Activated CD4-positive, alpha-beta T cell treated with anti-CD3 and anti-CD28 coated beads, Interleukin-2, amount 10 ng/mL, durations not matched to agents 24 days and 14 days (primary cell): ENCODE measurements at regions of chr1 and their contacts with region 1.

Region 1: GRCh38 chr1:38873027-38873969 is at the start of gene MYCBP:
- DNase-seq: peak; percentile 99
- H3K4me3 Mint-ChIP-seq: peak within 1 kb of the TSS; percentile 91
- H3K27ac Mint-ChIP-seq: peak within 1 kb of the TSS; percentile 81
- H3K4me1 Mint-ChIP-seq: peaks cover 26% of the 10 kb centered on the region
- H3K27me3 Mint-ChIP-seq: no peaks in the 10 kb centered on the region
- total RNA-seq, gene MYCBP: 35.1 and 40.7 TPM in 2 replicates

Region 2: DNA sequence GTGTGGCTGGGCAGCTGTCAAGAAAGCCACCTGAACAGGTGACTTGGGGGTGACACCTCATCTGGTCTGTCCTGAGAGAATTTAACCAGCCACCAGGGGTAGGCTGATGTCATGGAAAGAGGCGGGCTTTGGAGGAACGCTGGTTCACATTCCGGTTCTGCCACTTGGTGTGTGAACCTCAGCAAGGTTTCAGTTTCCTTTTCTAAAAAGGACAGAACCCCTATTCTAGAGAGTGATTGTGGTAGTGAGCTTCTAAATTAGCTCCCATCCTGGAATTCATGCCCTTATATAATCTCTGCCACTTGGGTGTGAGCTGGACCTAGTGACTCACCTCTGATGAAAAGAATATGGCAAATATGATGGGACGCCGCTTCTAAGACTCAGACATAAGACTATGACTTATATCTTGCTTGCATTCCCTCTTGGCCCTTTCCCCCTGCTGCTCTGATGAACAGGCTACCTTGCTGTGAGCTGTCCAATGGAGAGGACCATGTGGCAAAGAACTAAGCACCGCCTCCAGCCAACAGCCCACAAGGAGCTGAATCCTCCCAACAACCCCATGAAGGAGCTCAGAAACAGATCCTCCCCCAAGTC is 345.8 kb before region 1 on chr1:
- intact Hi-C with region 1: no loop called
- DNase-seq: peak; percentile 94
- H3K4me3 Mint-ChIP-seq: peak overlapping the region; percentile 63
- H3K27ac Mint-ChIP-seq: peak overlapping the region; percentile 86
- H3K4me1 Mint-ChIP-seq: peaks cover 21% of the 10 kb centered on the region
- H3K27me3 Mint-ChIP-seq: peaks cover 9% of the 10 kb centered on the region

Region 3: DNA sequence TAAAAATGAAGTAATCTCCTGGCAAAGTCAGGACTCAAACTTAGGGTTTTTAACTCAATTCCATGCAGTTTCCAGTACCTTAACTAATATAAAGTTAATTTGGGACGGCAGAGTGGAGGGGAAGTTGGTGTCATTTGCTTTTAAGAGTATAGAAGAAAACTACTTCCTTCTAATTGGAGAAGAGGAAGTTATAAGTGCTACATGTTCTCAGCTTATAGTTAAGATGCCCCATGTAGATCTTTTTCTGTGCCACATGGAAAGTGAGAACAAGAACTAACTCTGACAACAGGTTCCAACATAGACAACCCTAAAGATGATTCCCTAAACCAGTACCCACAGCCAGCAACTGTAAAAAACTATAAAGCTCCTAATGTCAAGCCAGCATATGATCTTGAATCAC is 25.2 kb before region 1 on chr1:
- intact Hi-C with region 1: no loop called
- DNase-seq: no peak
- H3K4me3 Mint-ChIP-seq: no peak overlapping the region
- H3K27ac Mint-ChIP-seq: no peak overlapping the region
- H3K4me1 Mint-ChIP-seq: peaks cover 5% of the 10 kb centered on the region
- H3K27me3 Mint-ChIP-seq: no peaks in the 10 kb centered on the region

Region 4: DNA sequence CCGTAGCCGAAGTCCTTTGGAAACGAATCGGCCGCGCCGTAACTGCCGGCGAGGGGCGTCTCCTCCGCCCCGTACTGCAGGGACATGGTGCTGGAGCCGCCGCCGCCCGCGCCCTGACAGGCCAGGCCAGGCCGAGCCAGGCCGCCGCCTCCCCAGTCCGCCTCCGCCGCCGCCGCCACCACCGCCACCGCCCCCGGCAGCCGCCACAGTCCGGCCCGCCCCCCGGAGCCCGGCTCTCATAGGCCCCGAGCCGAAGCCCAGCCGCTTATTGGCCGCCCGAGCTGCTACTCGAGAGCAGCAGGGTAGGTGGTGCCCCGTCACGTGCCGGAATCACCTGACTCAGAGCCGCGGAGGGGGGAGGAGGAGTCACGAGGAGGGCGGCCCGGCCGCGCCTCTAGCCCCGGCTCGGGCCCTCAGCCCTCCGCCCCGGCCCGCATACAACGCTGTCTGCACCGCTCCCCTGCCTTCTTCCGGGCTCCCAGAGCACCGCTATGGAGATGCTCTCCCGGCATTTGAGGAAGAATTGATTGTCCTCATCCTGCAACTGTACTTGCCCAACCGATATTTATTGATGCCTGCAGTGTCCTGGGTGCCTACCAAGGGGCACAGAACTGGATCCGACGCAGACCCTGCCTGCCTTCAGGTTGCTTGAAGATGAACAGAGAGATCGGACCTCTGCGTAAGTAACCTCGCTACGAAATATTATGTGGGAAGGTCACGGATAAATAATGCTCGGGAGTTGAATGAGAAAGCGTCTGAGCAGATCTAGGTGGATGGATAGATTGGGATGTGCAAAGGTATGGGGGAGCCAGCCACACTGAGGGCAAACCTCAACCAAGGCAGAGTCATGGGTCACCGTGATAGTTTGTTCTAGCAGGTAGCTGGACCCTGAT is 13.5 kb before region 1 on chr1 and contains the start of gene RRAGC:
- intact Hi-C with region 1: loop called (anchors 1 kb)
- DNase-seq: peak; percentile 100
- H3K4me3 Mint-ChIP-seq: peak within 1 kb of the TSS; percentile 88
- H3K27ac Mint-ChIP-seq: peak within 1 kb of the TSS; percentile 77
- H3K4me1 Mint-ChIP-seq: peaks cover 24% of the 10 kb centered on the region
- H3K27me3 Mint-ChIP-seq: no peaks in the 10 kb centered on the region
- total RNA-seq, gene RRAGC: 10.9 and 11.0 TPM in 2 replicates

Region 5: DNA sequence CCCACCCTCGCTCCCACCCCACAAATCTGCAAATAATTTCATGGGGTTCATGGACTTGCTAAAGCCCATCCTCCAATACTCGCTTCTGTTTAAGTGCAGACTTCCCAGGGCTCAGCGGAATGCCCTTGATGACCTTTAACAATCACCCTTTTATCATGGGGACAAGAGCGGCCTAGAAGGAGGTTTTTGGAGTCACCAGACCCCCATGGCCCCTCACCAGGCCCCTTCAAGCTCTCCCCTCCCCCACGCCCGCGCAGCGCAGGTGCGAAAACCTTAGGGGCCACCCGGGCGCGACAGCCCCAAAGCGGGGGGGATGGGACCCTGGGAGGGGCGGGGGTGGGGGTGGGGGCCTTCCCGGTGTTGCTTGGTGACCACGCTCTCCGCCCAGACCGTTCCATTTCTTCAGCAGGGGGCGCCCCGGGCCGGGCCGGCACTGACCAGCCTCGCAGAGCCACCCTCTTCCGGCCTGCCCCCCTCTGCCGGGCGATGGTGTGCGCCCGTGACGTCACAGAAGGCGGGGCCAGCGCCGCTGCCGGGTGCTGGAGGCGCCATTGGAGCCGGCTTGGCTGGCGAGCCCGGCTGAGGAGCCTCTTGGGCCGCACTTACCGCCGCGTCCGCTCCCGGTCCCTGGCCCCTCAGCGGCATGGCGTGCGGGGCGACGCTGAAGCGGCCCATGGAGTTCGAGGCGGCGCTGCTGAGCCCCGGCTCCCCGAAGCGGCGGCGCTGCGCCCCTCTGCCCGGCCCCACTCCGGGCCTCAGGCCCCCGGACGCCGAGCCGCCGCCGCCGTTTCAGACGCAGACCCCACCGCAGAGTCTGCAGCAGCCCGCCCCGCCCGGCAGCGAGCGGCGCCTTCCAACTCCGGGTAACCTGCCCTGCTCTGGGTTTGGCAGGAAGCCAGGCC is 117.7 kb after region 1 on chr1 and contains the start of gene AKIRIN1:
- intact Hi-C with region 1: loop called (anchors 1 kb)
- DNase-seq: peak; percentile 99
- H3K4me3 Mint-ChIP-seq: peak within 1 kb of the TSS; percentile 87
- H3K27ac Mint-ChIP-seq: peak within 1 kb of the TSS; percentile 90
- H3K4me1 Mint-ChIP-seq: peaks cover 35% of the 10 kb centered on the region
- H3K27me3 Mint-ChIP-seq: peaks cover 3% of the 10 kb centered on the region
- total RNA-seq, gene AKIRIN1: 76.0 and 79.3 TPM in 2 replicates

Region 6: GRCh38 chr1:39026051-39026865 is 153.0 kb after region 1 on chr1 and contains the start of gene NDUFS5:
- intact Hi-C with region 1: loop called (anchors 1 kb)
- DNase-seq: peak; percentile 95
- H3K4me3 Mint-ChIP-seq: peak within 1 kb of the TSS; percentile 91
- H3K27ac Mint-ChIP-seq: peak within 1 kb of the TSS; percentile 97
- H3K4me1 Mint-ChIP-seq: peaks cover 23% of the 10 kb centered on the region
- H3K27me3 Mint-ChIP-seq: peaks cover 2% of the 10 kb centered on the region
- total RNA-seq, gene NDUFS5: 162 and 164 TPM in 2 replicates

Region 7: GRCh38 chr1:39091845-39092645 is 218.7 kb after region 1 on chr1:
- intact Hi-C with region 1: loop called (anchors 5 kb)
- DNase-seq: peak; percentile 86
- H3K4me3 Mint-ChIP-seq: no peak overlapping the region
- H3K27ac Mint-ChIP-seq: no peak overlapping the region
- H3K4me1 Mint-ChIP-seq: no peaks in the 10 kb centered on the region
- H3K27me3 Mint-ChIP-seq: peaks cover 2% of the 10 kb centered on the region

Region 8: GRCh38 chr1:39183503-39184353 is 310.4 kb after region 1 on chr1:
- intact Hi-C with region 1: no loop called
- DNase-seq: peak; percentile 94
- H3K4me3 Mint-ChIP-seq: peak overlapping the region; percentile 74
- H3K27ac Mint-ChIP-seq: peak overlapping the region; percentile 97
- H3K4me1 Mint-ChIP-seq: peaks cover 45% of the 10 kb centered on the region
- H3K27me3 Mint-ChIP-seq: no peaks in the 10 kb centered on the region

Region 9: GRCh38 chr1:39575191-39576015 is 702.1 kb after region 1 on chr1:
- intact Hi-C with region 1: loop called (anchors 5 kb)
- DNase-seq: peak; percentile 84
- H3K4me3 Mint-ChIP-seq: peak overlapping the region; percentile 93
- H3K27ac Mint-ChIP-seq: peak overlapping the region; percentile 90
- H3K4me1 Mint-ChIP-seq: peaks cover 41% of the 10 kb centered on the region
- H3K27me3 Mint-ChIP-seq: no peaks in the 10 kb centered on the region